K562 (cell line): ENCODE measurements at regions of chr6 and their contacts with region 1.

Region 1: GRCh38 chr6:156776840-156777576 is at the start of gene ARID1B:
- DNase-seq: peak; percentile 75 to 83 (median 80)
- ATAC-seq: peak; percentile 49
- H3K4me3 ChIP-seq: peak within 1 kb of the TSS; percentile 75
- H3K27ac ChIP-seq: peak within 1 kb of the TSS; percentile 95
- H3K4me1 ChIP-seq: peaks cover 8 to 15% of the 10 kb centered on the region in 2 experiments; a peak in 3 of 5 replicates
- H3K27me3 ChIP-seq: no peaks in the 10 kb centered on the region
- CTCF ChIP-seq: no peak
- EP300 ChIP-seq: no peak
- POLR2A ChIP-seq: peak; percentile 81
- RAD21 ChIP-seq: peak in 1 of 2 experiments; percentile 15; a peak in 1 of 4 replicates
- polyA plus RNA-seq, gene ARID1B: 12.5 to 25.8 TPM

Region 2: DNA sequence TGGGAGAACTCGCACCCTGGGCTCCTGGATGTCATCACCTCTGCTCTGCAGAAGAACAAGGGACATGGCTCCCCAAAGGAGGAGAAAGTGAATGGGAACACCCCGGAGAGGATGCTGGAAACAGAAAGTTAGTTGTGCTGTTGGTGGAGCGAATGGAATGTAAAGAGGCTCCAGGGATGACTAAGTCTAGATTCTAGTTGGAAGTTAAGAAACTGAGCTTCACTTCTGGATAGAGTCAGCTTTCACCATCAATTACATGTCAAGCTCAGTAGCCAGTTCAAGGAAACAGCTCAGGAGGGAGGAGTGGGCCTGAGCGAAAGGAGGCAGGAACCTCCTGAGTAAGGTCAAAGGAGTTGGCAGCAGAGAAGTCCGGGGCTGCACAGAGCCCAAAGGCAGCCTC is 131.9 kb before region 1 on chr6:
- CTCF ChIA-PET with region 1: no interaction called
- POLR2A ChIA-PET with region 1: no interaction called
- in situ Hi-C with region 1: no loop called
- intact Hi-C with region 1: no loop called
- DNase-seq: no peak
- ATAC-seq: no peak; the same call in 2 of the 3 replicates
- H3K4me3 ChIP-seq: no peak overlapping the region
- H3K27ac ChIP-seq: no peak overlapping the region
- H3K4me1 ChIP-seq: no peaks in the 10 kb centered on the region; a peak in 1 of 5 replicates
- H3K27me3 ChIP-seq: peaks cover 24 to 35% of the 10 kb centered on the region in 2 experiments
- CTCF ChIP-seq: no peak
- EP300 ChIP-seq: no peak
- POLR2A ChIP-seq: no peak
- RAD21 ChIP-seq: no peak

Region 3: GRCh38 chr6:156719720-156720563 is 57.1 kb before region 1 on chr6:
- CTCF ChIA-PET with region 1: no interaction called
- POLR2A ChIA-PET with region 1: interaction called, 5 read pairs
- in situ Hi-C with region 1: no loop called
- intact Hi-C with region 1: loop called (anchors 2 kb)
- DNase-seq: peak; percentile 87 to 97 (median 90)
- ATAC-seq: peak; percentile 97
- H3K4me3 ChIP-seq: peak overlapping the region; percentile 29
- H3K27ac ChIP-seq: peak overlapping the region; percentile 90
- H3K4me1 ChIP-seq: peaks cover 33% of the 10 kb centered on the region in 2 experiments
- H3K27me3 ChIP-seq: no peaks in the 10 kb centered on the region
- CTCF ChIP-seq: no peak
- EP300 ChIP-seq: peak; percentile 52
- POLR2A ChIP-seq: peak; percentile 77
- RAD21 ChIP-seq: peak in 1 of 2 experiments; percentile 27; a peak in 2 of 4 replicates

Region 4: GRCh38 chr6:156795825-156796224 is 18.8 kb after region 1 on chr6:
- CTCF ChIA-PET with region 1: no interaction called
- POLR2A ChIA-PET with region 1: interaction called, 10 read pairs
- in situ Hi-C with region 1: no loop called
- intact Hi-C with region 1: no loop called
- DNase-seq: no peak
- ATAC-seq: peak; percentile 35
- H3K4me3 ChIP-seq: no peak overlapping the region
- H3K27ac ChIP-seq: no peak overlapping the region
- H3K4me1 ChIP-seq: peaks cover 7 to 12% of the 10 kb centered on the region in 2 experiments
- H3K27me3 ChIP-seq: no peaks in the 10 kb centered on the region
- CTCF ChIP-seq: no peak
- EP300 ChIP-seq: no peak
- POLR2A ChIP-seq: no peak
- RAD21 ChIP-seq: no peak

Region 5: DNA sequence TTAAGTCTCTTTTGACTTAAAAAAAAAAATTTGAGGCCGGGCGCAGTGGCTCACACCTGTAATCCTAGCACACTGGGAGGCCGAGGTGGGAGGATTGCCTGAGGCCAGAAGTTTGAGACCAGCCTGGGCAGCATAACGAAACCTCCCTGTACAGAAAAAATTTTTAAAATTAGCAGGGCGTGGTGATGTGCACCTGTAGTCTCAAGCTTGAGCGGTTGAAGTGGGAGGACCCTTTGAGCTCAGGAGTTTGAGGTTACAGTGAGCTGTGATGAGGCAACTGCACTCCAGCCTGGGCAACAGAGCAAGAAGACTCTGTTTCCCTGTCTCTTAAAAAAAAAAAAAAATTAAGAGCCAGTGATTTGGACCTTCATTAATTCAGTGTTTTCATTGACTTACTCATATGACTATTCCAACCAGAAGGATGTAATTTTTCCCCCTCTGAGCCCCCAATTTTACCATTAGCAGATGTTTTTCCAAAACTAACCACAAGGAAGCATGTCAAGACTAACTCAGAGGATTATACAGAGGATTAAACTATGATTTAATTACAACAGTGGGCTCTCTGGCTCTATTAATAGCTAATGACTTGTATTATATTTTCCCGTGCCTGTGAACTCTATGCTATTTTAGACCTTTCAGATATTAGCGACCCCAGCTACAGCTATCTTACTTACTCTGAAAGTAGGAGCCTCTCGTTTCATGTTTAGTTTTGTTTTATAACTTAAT is 75.3 kb after region 1 on chr6:
- CTCF ChIA-PET with region 1: no interaction called
- POLR2A ChIA-PET with region 1: no interaction called
- in situ Hi-C with region 1: no loop called
- intact Hi-C with region 1: loop called (anchors 5 kb)
- DNase-seq: no peak
- ATAC-seq: no peak
- H3K4me3 ChIP-seq: no peak overlapping the region
- H3K27ac ChIP-seq: no peak overlapping the region
- H3K4me1 ChIP-seq: peaks cover 15 to 60% of the 10 kb centered on the region in 2 experiments; a peak in 4 of 5 replicates
- H3K27me3 ChIP-seq: no peaks in the 10 kb centered on the region
- CTCF ChIP-seq: no peak
- EP300 ChIP-seq: no peak
- POLR2A ChIP-seq: no peak
- RAD21 ChIP-seq: no peak

Region 6: GRCh38 chr6:156886409-156886808 is 109.4 kb after region 1 on chr6:
- CTCF ChIA-PET with region 1: no interaction called
- POLR2A ChIA-PET with region 1: interaction called, 3 read pairs
- in situ Hi-C with region 1: no loop called
- intact Hi-C with region 1: loop called (anchors 5 kb)
- DNase-seq: peak in 2 of 4 experiments; percentile 57 to 62
- ATAC-seq: peak; percentile 73
- H3K4me3 ChIP-seq: no peak overlapping the region
- H3K27ac ChIP-seq: peak overlapping the region; percentile 51
- H3K4me1 ChIP-seq: peaks cover 3 to 24% of the 10 kb centered on the region in 2 experiments; a peak in 3 of 5 replicates
- H3K27me3 ChIP-seq: no peaks in the 10 kb centered on the region
- CTCF ChIP-seq: no peak
- EP300 ChIP-seq: no peak
- POLR2A ChIP-seq: no peak
- RAD21 ChIP-seq: no peak

Region 7: DNA sequence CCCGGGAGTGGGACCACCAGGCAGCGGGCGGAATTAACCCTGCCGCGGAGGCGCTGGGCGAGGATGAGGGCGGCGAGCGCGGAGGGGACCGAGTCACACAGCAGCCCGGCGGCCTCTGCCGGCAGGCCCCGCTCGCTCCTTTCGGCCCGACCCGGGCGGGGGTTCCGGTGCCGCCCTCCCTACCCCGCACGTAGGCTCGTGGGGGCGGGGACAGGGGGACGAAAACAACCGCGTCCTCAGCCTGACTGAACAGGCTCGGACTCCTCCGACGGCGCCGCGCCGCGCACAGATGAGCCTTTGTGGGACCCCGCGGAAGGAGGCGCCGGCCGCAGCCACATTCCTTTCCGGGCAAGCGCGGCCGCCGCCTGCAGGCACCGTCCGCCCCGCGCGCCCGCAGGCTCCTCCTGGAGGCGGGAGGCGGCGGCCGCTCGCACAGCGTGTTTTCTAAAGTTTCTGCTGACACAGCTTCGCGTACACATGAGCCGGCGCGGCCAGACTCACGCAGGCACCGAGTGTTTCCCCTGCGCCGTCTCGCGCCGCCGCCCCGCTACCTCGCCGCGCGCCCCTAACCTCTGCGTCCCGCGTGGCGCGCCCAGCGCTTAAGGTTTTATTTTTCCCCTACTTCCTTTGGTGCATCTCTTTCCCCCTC is 244.5 kb after region 1 on chr6:
- CTCF ChIA-PET with region 1: no interaction called
- POLR2A ChIA-PET with region 1: no interaction called
- in situ Hi-C with region 1: no loop called
- intact Hi-C with region 1: loop called (anchors 1 kb)
- DNase-seq: peak; percentile 87 to 93 (median 90)
- ATAC-seq: peak; percentile 92
- H3K4me3 ChIP-seq: peak overlapping the region; percentile 74
- H3K27ac ChIP-seq: peak overlapping the region; percentile 98
- H3K4me1 ChIP-seq: peaks cover 19 to 25% of the 10 kb centered on the region in 2 experiments
- H3K27me3 ChIP-seq: no peaks in the 10 kb centered on the region
- CTCF ChIP-seq: peak; percentile 52 to 73 (median 54); a peak in 5 of 6 replicates
- EP300 ChIP-seq: no peak
- POLR2A ChIP-seq: peak; percentile 96
- RAD21 ChIP-seq: peak; percentile 10 to 42